ENCODE measurements at regions of chr19 and their contacts with region 1.

Region 1: GRCh38 chr19:12956446-12957388 is at the start of gene GADD45GIP1:
- DNase-seq: peak; percentile 67
- ATAC-seq: peak; percentile 92
- H3K4me3 ChIP-seq: peak within 1 kb of the TSS; percentile 82 to 93 (median 89)
- H3K27ac ChIP-seq: peak within 1 kb of the TSS; percentile 88
- H3K4me1 ChIP-seq: peaks cover 23% of the 10 kb centered on the region
- H3K27me3 ChIP-seq: no peaks in the 10 kb centered on the region
- CTCF ChIP-seq: 0 out of 2 replicates have a peak, but pooled peaks have one; percentile 5
- EP300 ChIP-seq: no peak; a peak in 1 of 4 replicates
- POLR2A ChIP-seq: peak; percentile 88 to 94
- RAD21 ChIP-seq: peak; percentile 35; the same call in 1 of the 2 replicates
- total RNA-seq, gene GADD45GIP1: 24.6 and 37.4 TPM in 2 replicates

Region 2: GRCh38 chr19:12945479-12946091 is 11.1 kb before region 1 on chr19 and contains the start of gene RAD23A:
- CTCF ChIA-PET with region 1: no interaction called
- POLR2A ChIA-PET with region 1: interaction called, 25 read pairs
- in situ Hi-C with region 1: no loop called
- intact Hi-C with region 1: no loop called
- DNase-seq: peak; percentile 93
- ATAC-seq: peak; percentile 79
- H3K4me3 ChIP-seq: peak within 1 kb of the TSS; percentile 82 to 89 (median 84)
- H3K27ac ChIP-seq: peak within 1 kb of the TSS; percentile 91
- H3K4me1 ChIP-seq: peaks cover 41% of the 10 kb centered on the region
- H3K27me3 ChIP-seq: no peaks in the 10 kb centered on the region; a peak in 1 of 5 replicates
- CTCF ChIP-seq: 0 out of 2 replicates have a peak, but pooled peaks have one; percentile 6
- EP300 ChIP-seq: no peak
- POLR2A ChIP-seq: peak; percentile 78 to 90
- RAD21 ChIP-seq: peak; percentile 61
- total RNA-seq, gene RAD23A: 34.6 and 42.5 TPM in 2 replicates

Region 3: GRCh38 chr19:12994701-12995595 is 38.2 kb after region 1 on chr19 and contains the start of gene NFIX:
- CTCF ChIA-PET with region 1: no interaction called
- POLR2A ChIA-PET with region 1: no interaction called
- in situ Hi-C with region 1: no loop called
- intact Hi-C with region 1: no loop called
- DNase-seq: peak; percentile 24
- ATAC-seq: peak; percentile 12; the same call in 1 of the 3 replicates
- H3K4me3 ChIP-seq: peak within 1 kb of the TSS; percentile 79 to 96 (median 85); a peak in 5 of 6 replicates
- H3K27ac ChIP-seq: peak within 1 kb of the TSS; percentile 58
- H3K4me1 ChIP-seq: peaks cover 32% of the 10 kb centered on the region
- H3K27me3 ChIP-seq: no peaks in the 10 kb centered on the region
- CTCF ChIP-seq: peak; percentile 10; the same call in 1 of the 2 replicates
- EP300 ChIP-seq: no peak
- POLR2A ChIP-seq: no peak
- RAD21 ChIP-seq: no peak
- total RNA-seq, gene NFIX: 5.4 and 5.6 TPM in 2 replicates

Region 4: DNA sequence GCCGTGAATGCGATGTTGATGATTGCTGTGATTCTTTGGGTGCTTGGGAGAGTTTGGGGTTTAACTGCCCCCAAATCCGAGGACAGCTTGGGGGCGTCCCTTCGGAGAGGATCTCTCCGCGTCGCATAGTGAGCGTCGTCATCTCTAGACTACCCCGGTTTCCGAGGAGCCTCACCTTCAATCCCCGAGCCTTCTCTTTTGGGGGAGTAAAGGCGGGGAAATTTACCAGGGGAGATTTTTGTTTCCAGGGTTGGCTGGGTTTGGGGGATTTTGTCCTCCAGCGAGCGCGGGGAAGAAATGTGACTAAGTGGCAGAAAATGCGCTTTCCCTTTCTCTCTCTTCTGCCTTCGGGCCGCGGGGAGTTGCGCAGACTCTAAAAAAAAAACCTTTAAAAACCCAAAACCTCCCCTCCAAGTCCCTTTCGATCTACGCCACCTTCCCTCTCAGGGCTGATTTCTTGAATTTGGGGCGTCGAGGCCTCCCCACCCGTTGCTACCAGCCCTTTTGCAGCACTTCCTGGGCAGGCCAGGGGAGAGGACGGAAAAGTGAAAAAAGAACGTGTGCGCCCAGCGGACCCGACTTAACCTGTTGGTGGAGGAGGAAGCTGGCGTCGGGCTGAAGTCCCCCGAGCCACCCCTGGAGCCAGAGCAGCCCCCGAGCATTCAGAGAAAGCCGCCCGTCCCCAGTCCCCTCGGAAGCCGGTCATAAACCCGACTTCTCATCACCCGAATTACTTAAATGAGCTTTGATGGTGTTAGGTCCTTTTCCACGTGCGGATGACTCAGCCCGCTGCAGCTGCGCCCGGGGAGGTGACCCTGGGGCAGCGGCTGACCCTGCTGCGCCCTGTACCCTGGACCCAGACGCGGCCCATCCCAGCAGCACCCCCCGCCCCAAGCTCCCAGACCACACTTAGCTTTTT is 56.2 kb after region 1 on chr19:
- CTCF ChIA-PET with region 1: no interaction called
- POLR2A ChIA-PET with region 1: no interaction called
- in situ Hi-C with region 1: no loop called
- intact Hi-C with region 1: no loop called
- DNase-seq: peak; percentile 52
- ATAC-seq: peak; percentile 80
- H3K4me3 ChIP-seq: peak overlapping the region in 1 of 3 experiments; percentile 54; a peak in 1 of 6 replicates
- H3K27ac ChIP-seq: peak overlapping the region; percentile 73
- H3K4me1 ChIP-seq: peaks cover 31% of the 10 kb centered on the region
- H3K27me3 ChIP-seq: no peaks in the 10 kb centered on the region
- CTCF ChIP-seq: no peak
- EP300 ChIP-seq: peak in 1 of 2 experiments; percentile 45; a peak in 2 of 4 replicates
- POLR2A ChIP-seq: no peak
- RAD21 ChIP-seq: peak; percentile 44; the same call in 1 of the 2 replicates

Region 5: GRCh38 chr19:13022859-13023636 is 66.3 kb after region 1 on chr19:
- CTCF ChIA-PET with region 1: no interaction called
- POLR2A ChIA-PET with region 1: no interaction called
- in situ Hi-C with region 1: no loop called
- intact Hi-C with region 1: no loop called
- DNase-seq: peak; percentile 79
- ATAC-seq: peak; percentile 82
- H3K4me3 ChIP-seq: peak overlapping the region; percentile 52 to 71 (median 62)
- H3K27ac ChIP-seq: peak overlapping the region; percentile 73
- H3K4me1 ChIP-seq: peaks cover 83% of the 10 kb centered on the region
- H3K27me3 ChIP-seq: no peaks in the 10 kb centered on the region
- CTCF ChIP-seq: no peak
- EP300 ChIP-seq: no peak
- POLR2A ChIP-seq: no peak
- RAD21 ChIP-seq: no peak